AG04449 (cell line): ENCODE measurements at regions of chr12 and their contacts with region 1.

Region 1: DNA sequence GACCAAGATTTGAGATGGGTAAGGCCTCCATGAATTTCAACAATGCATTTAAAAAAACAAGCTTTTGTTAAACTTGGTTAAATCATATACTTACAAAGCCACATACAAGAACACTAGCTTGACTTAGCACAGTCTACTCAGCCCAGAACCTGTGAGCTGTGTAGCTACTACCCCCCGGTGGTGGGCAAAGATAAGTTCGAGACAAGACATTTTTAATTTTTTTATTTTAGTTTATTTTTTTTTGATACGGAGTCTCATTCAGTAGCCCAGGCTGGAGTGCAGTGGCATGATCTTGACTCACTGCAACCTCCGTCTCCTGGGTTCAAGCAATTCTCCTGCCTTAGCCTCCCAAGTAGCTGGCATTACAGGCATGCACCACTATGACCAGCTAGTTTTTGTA is 3.7 kb upstream of the NECAP1 start:
- DNase-seq: peak; percentile 52
- H3K4me3 ChIP-seq: no peak overlapping the region
- CTCF ChIP-seq: peak; percentile 44

Region 2: GRCh38 chr12:7859552-7859951 is 218.8 kb before region 1 on chr12:
- CTCF ChIA-PET with region 1: interaction called, 10 read pairs
- POLR2A ChIA-PET with region 1: no interaction called
- DNase-seq: no peak
- H3K4me3 ChIP-seq: peak overlapping the region; percentile 16
- CTCF ChIP-seq: no peak

Region 3: GRCh38 chr12:8038659-8039114 is 39.7 kb before region 1 on chr12:
- CTCF ChIA-PET with region 1: interaction called, 107 read pairs
- POLR2A ChIA-PET with region 1: interaction called, 3 read pairs
- DNase-seq: no peak
- H3K4me3 ChIP-seq: peak overlapping the region; percentile 45
- CTCF ChIP-seq: no peak

Region 4: DNA sequence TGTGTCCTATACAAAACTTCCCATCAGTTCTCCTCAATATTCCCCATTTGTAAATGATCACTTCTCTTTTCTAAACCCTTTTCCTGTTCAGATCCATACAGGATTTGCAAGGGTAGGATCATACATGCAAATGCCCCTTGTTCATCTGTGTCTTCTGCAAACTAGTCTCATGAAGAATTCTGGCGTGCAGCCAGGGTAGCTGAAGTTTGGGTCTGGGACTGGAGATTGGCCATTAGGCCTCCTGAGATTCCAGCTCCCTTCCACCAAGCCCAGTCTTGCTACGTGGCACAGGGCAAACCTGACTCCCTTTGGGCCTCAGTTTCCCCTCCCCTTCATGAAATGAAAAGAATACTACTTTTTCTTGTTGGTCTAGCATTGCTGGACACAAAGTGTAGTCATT is 23.6 kb before region 1 on chr12:
- CTCF ChIA-PET with region 1: interaction called, 11 read pairs
- POLR2A ChIA-PET with region 1: no interaction called
- DNase-seq: no peak
- H3K4me3 ChIP-seq: no peak overlapping the region
- CTCF ChIP-seq: no peak